ENCODE measurements at regions of chr10 and their contacts with region 1.

Region 1: DNA sequence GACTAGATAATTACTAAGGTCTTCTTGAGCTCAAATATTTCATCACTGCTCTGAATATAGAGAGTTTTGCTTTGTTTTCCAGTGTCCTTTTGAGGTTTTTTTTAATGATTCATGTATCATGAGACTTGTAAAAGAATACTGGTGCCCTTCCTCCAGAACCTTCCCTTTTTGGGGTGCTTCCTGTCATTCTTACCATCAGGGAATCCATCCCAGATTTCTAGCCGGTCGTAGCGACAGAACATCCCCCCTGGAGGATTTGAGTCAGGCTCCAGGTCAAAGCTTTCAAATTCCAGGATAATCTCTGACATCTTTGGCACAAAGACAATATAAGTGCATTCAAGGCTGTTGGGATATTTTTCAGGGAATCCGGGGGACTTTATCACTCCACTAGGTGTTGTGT is 71.0 kb downstream of the NRP1 start:
- DNase-seq: no peak
- ATAC-seq: peak in 1 of 2 donors; percentile 13
- H3K4me3 ChIP-seq: no peak overlapping the region
- H3K27ac ChIP-seq: no peak overlapping the region
- H3K4me1 ChIP-seq: peaks cover 9% of the 10 kb centered on the region
- H3K27me3 ChIP-seq: no peaks in the 10 kb centered on the region

Region 2: DNA sequence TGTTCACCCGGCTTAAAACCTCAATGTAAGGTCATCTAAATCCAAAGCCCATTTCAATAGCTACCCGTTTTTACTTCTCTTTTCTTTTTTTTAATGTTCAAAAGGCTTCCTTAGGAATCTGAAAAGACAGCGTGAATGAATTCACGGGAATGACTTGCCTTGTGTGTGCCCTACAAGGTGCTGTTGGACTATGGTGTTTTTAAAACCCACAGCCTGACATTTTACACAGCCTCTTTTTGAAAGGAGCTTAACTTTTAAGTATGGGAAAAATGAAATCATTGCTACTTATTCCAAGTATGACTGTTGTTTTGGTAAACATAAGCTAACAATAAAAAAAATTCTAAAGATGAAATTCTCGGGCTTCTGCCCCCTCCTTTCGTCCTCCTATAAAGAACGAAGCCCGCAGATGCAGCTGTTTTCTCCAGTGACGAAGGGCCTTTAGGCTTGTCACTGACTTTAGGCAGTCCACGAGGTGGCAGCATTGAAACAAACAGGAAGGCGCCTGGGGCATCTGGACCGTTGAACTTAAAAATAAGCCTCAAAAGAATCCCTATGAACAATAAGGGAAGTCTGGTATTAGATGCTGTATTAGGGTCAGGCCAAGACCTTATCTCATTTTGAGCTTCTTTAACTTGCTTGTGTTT is 70.3 kb before region 1 on chr10:
- intact Hi-C with region 1: loop called in 1 of 4 experiments (anchors 10 kb)
- DNase-seq: peak; percentile 85 to 92 (median 88)
- ATAC-seq: peak; percentile 84 to 89
- H3K4me3 ChIP-seq: no peak overlapping the region
- H3K27ac ChIP-seq: peak overlapping the region; percentile 43
- H3K4me1 ChIP-seq: peaks cover 9% of the 10 kb centered on the region
- H3K27me3 ChIP-seq: no peaks in the 10 kb centered on the region

Measured in right cardiac atrium (tissue), 5 donors.